ENCODE measurements at regions of chr10 and their contacts with region 1.

Region 1: DNA sequence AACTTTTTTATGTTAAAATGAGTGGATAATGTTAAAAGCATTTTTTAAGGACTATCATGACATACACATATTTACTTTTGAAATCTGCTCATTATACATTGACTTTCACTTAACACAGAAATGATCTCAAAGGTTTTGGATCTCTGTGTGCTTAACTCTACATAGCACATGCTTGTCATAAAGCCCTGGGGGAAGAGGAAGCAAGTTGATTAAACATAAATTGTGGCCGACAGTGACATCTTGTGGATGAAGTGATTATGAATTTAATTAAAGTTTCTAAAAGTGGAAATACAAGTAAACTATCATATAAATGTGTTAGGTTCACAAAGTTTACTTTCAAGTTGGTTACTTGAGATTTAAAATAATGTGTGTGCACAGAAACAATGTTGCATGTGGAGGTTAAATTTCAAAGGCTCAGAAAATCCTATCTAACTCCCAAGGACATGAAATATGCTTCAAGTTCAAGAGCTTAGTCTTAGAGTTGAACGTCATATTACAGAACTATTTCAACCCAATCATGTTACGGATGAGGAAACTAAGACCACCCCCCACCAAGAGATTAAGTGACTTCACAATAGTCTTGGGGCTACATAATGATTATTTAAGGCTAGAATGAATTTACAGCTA is 1247.7 kb downstream of the GATA3 start:
- DNase-seq: peak; percentile 16
- ATAC-seq: no peak
- H3K4me3 Mint-ChIP-seq: no peak overlapping the region
- H3K27ac Mint-ChIP-seq: no peak overlapping the region
- H3K4me1 Mint-ChIP-seq: no peaks in the 10 kb centered on the region
- H3K27me3 Mint-ChIP-seq: peaks cover 15% of the 10 kb centered on the region

Region 2: GRCh38 chr10:7525314-7526016 is 1776.8 kb before region 1 on chr10:
- CTCF ChIA-PET with region 1: interaction called, 6 read pairs
- POLR2A ChIA-PET with region 1: no interaction called
- intact Hi-C with region 1: loop called (anchors 1 to 5 kb)
- DNase-seq: peak; percentile 77
- ATAC-seq: peak; percentile 90
- H3K4me3 Mint-ChIP-seq: no peak overlapping the region
- H3K27ac Mint-ChIP-seq: no peak overlapping the region
- H3K4me1 Mint-ChIP-seq: peaks cover 18% of the 10 kb centered on the region
- H3K27me3 Mint-ChIP-seq: peaks cover 2% of the 10 kb centered on the region

Region 3: GRCh38 chr10:7756360-7756992 is 1545.8 kb before region 1 on chr10:
- CTCF ChIA-PET with region 1: interaction called, 3 read pairs
- POLR2A ChIA-PET with region 1: no interaction called
- intact Hi-C with region 1: loop called in 1 of 2 experiments (anchors 1 kb)
- DNase-seq: peak; percentile 49
- ATAC-seq: peak; percentile 53
- H3K4me3 Mint-ChIP-seq: no peak overlapping the region
- H3K27ac Mint-ChIP-seq: no peak overlapping the region
- H3K4me1 Mint-ChIP-seq: no peaks in the 10 kb centered on the region
- H3K27me3 Mint-ChIP-seq: no peaks in the 10 kb centered on the region

Region 4: GRCh38 chr10:8473205-8473604 is 829.0 kb before region 1 on chr10:
- CTCF ChIA-PET with region 1: no interaction called
- POLR2A ChIA-PET with region 1: no interaction called
- intact Hi-C with region 1: loop called in 1 of 2 experiments (anchors 10 kb)
- DNase-seq: peak; percentile 18
- ATAC-seq: peak; percentile 49
- H3K4me3 Mint-ChIP-seq: no peak overlapping the region
- H3K27ac Mint-ChIP-seq: no peak overlapping the region
- H3K4me1 Mint-ChIP-seq: peaks cover 5% of the 10 kb centered on the region
- H3K27me3 Mint-ChIP-seq: peaks cover 15% of the 10 kb centered on the region

Region 5: DNA sequence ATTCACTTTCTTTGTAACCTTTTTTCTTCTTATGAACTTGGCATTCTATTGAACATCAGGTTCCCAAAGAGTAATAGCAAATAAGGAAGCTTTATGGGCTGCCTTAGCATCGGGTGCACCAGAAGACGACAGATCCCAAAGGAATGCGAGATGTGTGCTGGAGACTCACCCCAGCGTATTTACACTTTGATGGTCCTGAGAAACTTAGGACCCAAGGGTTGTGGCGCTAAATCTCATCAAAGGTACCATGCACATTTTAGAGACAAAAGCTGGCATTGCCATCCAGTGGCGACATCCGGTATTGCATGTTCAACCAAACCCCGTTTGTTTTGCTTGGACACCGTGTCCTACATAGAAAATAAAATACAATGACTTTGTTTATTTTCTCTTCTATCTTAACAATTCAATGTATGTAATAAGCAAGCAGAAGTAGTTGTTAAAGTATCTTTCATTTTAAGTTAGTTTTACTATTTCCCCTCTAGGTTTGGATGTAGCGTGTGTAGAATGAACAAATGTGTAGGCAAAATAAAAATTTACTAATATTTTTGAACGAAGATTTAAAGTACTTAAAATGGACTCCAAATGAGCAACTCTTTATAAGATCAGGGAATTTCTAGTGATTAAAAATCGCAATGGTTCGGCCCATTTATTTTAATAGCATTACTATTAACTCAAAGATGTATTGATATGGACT is 93.0 kb before region 1 on chr10:
- CTCF ChIA-PET with region 1: interaction called, 6 read pairs
- POLR2A ChIA-PET with region 1: no interaction called
- intact Hi-C with region 1: loop called (anchors 1 to 5 kb)
- DNase-seq: peak; percentile 85
- ATAC-seq: peak; percentile 53
- H3K4me3 Mint-ChIP-seq: no peak overlapping the region
- H3K27ac Mint-ChIP-seq: no peak overlapping the region
- H3K4me1 Mint-ChIP-seq: peaks cover 9% of the 10 kb centered on the region
- H3K27me3 Mint-ChIP-seq: peaks cover 5% of the 10 kb centered on the region

Region 6: DNA sequence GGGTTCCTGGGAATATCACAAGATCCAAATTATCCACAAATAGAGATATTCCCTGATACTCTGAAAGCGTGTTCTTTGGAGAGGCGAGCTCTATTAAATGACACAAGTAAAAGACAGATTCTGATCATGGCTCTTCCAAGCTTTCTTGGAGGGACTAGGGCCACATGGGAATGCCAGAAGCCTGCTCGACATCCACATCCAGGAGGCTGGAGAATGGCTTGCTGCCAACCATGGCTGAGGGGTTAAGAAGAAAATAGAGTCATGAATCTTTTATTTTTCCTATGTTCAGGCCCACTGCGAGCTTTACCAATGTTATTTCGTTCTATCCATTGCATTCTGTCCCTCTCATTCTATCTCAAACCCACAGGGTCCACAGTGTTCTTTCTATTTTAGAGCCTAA is 697.4 kb after region 1 on chr10:
- CTCF ChIA-PET with region 1: no interaction called
- POLR2A ChIA-PET with region 1: no interaction called
- intact Hi-C with region 1: no loop called
- DNase-seq: no peak
- ATAC-seq: no peak
- H3K4me3 Mint-ChIP-seq: no peak overlapping the region
- H3K27ac Mint-ChIP-seq: no peak overlapping the region
- H3K4me1 Mint-ChIP-seq: no peaks in the 10 kb centered on the region
- H3K27me3 Mint-ChIP-seq: peaks cover 3% of the 10 kb centered on the region